ENCODE measurements at regions of chr5 and their contacts with region 1.

Region 1: DNA sequence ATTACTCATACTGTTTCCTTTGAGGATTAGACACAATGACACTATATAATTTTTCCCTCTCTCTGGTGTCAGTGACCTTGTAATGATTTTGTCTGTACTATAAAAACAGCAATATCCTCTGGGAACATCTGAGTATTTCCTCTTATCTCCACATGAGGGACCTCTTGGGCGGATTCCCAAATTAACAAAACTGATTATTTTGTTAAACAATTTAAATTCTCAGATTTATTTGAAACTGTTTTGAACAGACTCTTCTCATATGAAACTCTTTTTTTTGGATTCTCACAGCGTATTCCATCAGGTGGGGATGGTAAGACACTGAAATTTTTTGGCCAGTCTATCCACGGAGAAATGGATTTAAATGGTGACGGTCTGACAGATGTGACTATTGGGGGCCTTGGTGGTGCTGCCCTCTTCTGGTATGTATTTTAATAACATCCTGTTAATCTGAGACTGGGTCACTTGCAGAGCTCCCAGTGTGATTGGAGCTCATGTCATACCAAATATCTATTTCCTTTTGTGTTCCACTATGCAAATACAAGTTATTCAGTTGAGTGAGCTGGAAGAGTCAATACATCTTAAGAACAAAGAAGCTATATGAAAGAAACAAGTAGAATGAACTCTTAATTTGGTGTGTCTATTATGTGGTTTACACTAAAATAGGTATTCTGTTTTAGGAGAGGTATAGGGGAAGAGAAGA is 73.8 kb upstream of the ITGA2 start:
- DNase-seq: no peak
- ATAC-seq: peak; percentile 91 to 95
- H3K4me3 ChIP-seq: peak overlapping the region; percentile 30
- H3K27ac ChIP-seq: no peak overlapping the region
- H3K4me1 ChIP-seq: peaks cover 6% of the 10 kb centered on the region
- H3K27me3 ChIP-seq: no peaks in the 10 kb centered on the region
- CTCF ChIP-seq: peak; percentile 75

Region 2: GRCh38 chr5:52787600-52788504 is 127.5 kb before region 1 on chr5 and contains the starts of genes ITGA1 and PELO:
- intact Hi-C with region 1: loop called (anchors 5 kb)
- DNase-seq: peak; percentile 74
- ATAC-seq: peak; percentile 94 to 97
- H3K4me3 ChIP-seq: peak within 1 kb of the TSS; percentile 72
- H3K27ac ChIP-seq: peak within 1 kb of the TSS; percentile 91
- H3K4me1 ChIP-seq: peaks cover 10% of the 10 kb centered on the region
- H3K27me3 ChIP-seq: no peaks in the 10 kb centered on the region
- CTCF ChIP-seq: peak; percentile 50
- total RNA-seq, gene ITGA1: 84.4 TPM
- total RNA-seq, gene PELO: 31.5 TPM

Region 3: DNA sequence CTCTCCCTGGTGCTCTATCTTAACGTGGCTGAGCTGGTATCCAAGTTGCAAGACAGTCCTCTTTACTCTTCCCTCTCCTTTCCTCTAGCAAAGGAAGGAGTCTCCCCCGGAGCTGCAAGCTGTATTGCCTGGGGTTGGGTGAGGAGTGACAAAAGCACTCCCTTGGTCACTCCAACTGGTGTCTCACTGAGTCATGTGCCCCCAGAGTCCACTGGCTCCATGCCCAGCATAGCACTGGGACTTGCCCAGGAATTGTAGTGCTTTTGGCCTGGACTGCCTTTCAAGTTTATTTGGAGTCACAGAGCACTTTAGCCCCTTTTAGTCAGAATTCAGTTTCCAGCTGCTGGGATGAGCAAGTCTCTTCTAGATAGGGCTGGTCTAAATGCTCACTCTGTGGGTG is 482.5 kb after region 1 on chr5:
- intact Hi-C with region 1: no loop called
- DNase-seq: no peak
- ATAC-seq: peak; percentile 32 to 37
- H3K4me3 ChIP-seq: no peak overlapping the region
- H3K27ac ChIP-seq: no peak overlapping the region
- H3K4me1 ChIP-seq: no peaks in the 10 kb centered on the region
- H3K27me3 ChIP-seq: no peaks in the 10 kb centered on the region
- CTCF ChIP-seq: no peak